Spleen (tissue), 13 donors: ENCODE measurements at regions of chr2 and their contacts with region 1.

Region 1: GRCh38 chr2:44981136-44982108 is 27.8 kb downstream of the SIX2 start:
- DNase-seq: peak; percentile 86
- H3K4me3 ChIP-seq: no peak overlapping the region
- H3K27ac ChIP-seq: no peak overlapping the region
- H3K4me1 ChIP-seq: peaks cover 0 to 6% (median 1%) of the 10 kb centered on the region in 6 donors
- H3K27me3 ChIP-seq: peaks cover 0 to 62% (median 3%) of the 10 kb centered on the region in 7 donors
- CTCF ChIP-seq: peak; percentile 39 to 92 (median 80)
- POLR2A ChIP-seq: no peak

Region 2: GRCh38 chr2:44753552-44754285 is 227.7 kb before region 1 on chr2:
- intact Hi-C with region 1: no loop called
- DNase-seq: no peak
- H3K4me3 ChIP-seq: no peak overlapping the region
- H3K27ac ChIP-seq: no peak overlapping the region
- H3K4me1 ChIP-seq: no peaks in the 10 kb centered on the region
- H3K27me3 ChIP-seq: no peaks in the 10 kb centered on the region
- CTCF ChIP-seq: no peak
- POLR2A ChIP-seq: no peak

Region 3: DNA sequence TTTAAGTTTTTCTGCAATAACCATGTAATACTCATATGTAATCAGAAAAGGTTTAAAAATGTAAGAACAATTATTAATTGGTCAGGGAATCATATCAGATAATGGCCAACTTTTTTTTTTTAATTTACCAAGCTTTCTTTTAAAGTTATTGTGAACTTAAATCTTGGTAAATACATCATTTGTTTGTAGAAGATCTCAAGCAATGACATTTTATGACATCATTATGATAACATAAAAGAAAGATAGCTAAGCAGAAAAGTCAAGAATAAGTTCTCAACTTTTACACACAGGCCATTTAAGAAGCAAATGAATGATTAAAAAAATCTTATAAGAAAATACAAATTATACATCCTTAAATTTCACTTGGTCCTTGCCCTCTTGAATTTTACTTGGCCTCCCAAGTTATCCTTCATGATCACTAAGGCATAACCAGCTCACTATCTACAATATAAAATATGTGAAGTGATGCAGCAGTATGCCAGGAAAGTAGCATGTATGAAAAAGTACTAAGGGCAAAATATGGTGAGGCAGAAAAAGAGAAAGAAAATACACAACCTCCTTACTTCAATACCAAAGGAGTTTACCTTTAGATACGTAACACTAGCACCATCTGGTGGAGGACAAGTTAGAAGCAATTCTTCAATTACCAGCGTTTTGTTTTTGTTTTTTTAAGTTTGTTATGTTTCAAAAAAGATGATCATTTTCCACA is 513.0 kb after region 1 on chr2:
- intact Hi-C with region 1: loop called (anchors 2 kb)
- DNase-seq: no peak
- H3K4me3 ChIP-seq: no peak overlapping the region
- H3K27ac ChIP-seq: no peak overlapping the region
- H3K4me1 ChIP-seq: peaks cover 0 to 10% (median 0%) of the 10 kb centered on the region in 6 donors
- H3K27me3 ChIP-seq: no peaks in the 10 kb centered on the region
- CTCF ChIP-seq: peak in 10 of 11 experiments; percentile 27 to 71 (median 62)
- POLR2A ChIP-seq: no peak

Region 4: DNA sequence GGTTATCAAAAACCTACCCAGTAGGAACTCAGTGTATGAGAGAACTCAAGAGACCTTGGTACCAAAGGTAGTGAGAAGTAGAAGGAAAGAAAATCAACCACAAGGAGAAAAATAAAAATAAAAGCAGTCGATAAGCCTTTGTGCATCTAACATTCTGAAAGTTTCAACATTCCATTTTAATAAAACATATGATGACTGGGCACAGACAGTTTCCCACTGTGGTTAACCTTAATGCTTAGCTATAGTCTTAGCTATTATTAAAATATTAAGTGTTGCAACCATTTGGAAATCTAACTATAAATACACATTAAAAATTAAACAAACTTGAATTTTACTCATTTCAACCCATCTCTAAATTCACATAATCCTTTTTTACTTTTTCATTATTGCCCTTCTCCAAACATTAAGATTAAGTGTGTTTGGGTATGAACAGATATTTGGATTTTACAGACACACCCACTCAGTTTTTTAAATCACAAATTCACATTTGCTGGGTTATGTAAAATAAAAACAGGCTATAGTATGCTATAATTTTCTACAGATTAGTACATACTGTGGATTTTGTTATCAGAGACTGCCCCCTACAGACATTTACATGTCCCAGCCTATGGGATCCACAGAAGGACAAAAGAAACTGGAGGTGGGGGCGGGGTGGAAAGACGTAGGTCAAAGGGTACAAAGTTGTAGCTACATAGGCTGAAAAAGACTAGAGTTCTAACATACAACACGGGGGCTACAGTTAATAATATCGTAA is 596.8 kb after region 1 on chr2:
- intact Hi-C with region 1: loop called (anchors 10 kb)
- DNase-seq: no peak
- H3K4me3 ChIP-seq: no peak overlapping the region
- H3K27ac ChIP-seq: no peak overlapping the region
- H3K4me1 ChIP-seq: peaks cover 0 to 25% (median 2%) of the 10 kb centered on the region in 6 donors
- H3K27me3 ChIP-seq: no peaks in the 10 kb centered on the region
- CTCF ChIP-seq: peak in 9 of 11 experiments; percentile 7 to 61 (median 50)
- POLR2A ChIP-seq: no peak